Cardiac septum (tissue), 1 donor: ENCODE measurements at regions of chr12 and their contacts with region 1.

Region 1: DNA sequence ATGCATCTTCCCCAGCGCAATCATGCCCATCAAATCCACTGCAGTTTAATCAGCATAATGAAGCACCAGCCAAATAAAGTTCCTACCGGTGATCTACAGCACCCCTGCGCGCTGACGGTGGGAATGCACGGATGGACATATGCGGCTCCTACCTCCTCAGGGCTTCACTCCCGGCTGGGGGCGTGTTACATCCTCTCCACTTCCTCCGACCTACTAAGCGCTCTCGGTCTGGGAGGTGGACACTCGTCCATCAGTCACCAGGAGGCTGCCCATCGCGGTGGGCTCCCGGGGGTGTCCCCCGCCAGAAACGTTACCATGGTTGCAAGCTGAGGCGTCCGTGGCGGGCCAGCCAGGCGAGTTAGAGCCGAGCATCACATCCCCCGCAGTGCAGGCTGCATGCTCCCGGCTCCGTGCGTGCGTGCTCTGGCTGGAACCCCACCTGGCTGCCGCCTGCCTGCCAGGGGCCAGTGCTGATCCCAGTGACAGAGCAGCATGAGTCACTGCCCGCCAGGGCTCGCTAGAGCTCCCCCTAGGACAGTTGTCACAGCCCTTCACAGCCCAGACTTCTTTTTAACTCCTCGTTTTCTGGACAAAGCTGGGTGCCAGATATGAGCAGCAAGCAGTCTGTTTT is 73.0 kb downstream of the CIT start:
- DNase-seq: no peak

Region 2: DNA sequence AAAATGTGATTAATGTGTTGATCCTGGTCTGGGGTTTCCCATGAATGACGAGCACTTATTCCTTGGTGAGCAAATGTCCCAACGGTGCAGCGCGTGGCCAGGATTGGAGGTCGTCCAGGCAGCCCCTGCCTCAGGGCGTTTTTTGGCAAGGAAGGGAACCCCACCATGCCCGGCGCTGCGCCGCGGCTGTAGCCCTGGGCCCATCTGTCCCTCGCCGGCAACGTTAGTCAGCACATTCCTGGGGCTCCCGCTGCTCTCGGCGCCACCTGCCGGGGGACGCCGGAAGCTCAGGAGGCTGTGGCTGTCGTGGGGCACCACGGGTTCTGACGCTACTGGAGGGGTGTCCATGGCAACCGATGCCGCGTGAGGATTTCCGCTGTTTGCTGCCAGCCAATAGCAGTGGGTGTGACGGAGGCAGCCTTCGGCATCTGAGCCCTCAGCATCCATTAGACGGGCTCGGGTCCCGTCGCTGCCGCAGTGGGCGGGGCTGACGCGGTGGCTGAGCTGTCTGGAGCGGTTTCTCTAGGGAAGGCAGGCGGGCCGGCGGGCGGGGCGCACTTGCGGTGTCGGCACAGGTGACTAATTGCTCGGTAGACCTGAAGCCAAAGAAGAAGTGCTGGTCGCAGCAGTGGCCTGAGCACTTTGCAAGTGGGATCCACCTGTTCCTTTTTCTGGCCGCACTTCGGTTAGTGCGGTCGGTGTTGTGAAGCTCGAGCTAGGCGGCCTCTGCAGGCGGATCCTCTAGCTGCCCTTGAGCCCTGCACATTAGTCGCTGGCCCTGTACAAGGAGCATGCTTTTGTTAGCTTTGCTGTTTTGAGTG is 282.9 kb after region 1 on chr12:
- intact Hi-C with region 1: loop called (anchors 5 kb)
- DNase-seq: peak; percentile 99

Region 3: DNA sequence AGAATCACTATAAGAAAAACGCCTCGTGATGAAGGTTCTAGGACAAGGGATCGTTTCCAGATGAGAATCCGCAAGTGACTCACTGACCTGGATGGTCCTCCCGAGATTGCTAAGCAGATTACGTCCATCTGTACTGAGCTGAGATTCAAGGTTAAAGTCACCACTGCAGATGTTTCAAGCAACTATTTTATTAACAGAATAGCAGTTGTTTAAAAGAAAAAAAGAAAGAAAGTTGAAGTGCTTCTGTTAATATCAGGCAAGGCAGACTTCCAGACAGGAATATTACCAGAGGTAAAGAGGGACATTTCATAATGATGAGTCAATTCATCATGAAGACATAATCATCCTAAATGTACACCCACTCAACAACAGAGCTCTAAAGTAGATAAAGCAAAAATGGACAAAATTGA is 443.5 kb after region 1 on chr12:
- intact Hi-C with region 1: no loop called
- DNase-seq: no peak